ENCODE measurements at regions of chr15 and their contacts with region 1.

Region 1: DNA sequence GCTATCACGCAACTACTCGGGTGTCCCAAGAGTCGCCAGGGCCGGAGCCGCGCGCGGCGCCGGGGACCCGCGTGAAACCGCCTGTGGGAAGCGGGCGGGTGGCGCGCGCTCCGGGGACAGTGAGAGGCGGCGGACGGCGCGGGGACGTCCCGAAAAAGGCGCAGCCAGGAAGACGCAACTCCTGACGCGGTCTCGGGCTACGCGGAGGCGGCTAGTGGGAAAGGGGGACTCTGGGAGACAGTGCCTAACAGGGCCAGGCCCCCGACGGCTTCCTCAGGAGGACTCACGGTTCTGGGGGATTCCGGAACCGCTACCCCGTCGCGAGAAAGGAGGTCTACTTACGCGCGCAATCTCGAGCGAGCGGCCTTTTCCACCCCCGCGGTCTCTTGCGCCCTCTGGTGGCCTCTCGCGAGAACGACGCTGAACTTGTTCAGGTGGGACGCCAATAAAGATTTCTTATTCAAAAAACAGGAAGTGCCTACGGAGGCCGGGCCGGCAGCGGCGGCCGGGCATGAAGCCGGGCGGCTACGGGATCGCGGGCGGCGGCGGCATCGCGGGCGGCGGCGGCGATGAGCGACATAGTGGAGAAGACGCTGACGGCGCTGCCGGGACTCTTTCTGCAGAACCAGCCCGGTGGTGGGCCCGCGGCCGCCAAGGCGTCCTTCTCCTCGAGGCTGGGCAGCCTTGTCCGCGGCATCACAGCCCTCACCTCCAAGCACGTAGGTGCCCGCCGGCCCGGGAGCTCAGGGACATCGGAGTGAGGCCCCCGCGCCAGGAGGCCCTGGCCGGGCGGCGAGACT is at the start of gene AP4E1:
- DNase-seq: peak; percentile 94
- H3K4me3 ChIP-seq: peak within 1 kb of the TSS; percentile 98
- H3K27ac ChIP-seq: peak within 1 kb of the TSS; percentile 87
- H3K4me1 ChIP-seq: peaks cover 30% of the 10 kb centered on the region
- H3K27me3 ChIP-seq: no peaks in the 10 kb centered on the region
- total RNA-seq, gene AP4E1: 14.4 and 15.0 TPM in 2 replicates

Region 2: GRCh38 chr15:50353975-50354837 is 554.2 kb before region 1 on chr15:
- in situ Hi-C with region 1: no loop called
- DNase-seq: peak; percentile 87
- H3K4me3 ChIP-seq: peak overlapping the region; percentile 89
- H3K27ac ChIP-seq: peak overlapping the region; percentile 99
- H3K4me1 ChIP-seq: peaks cover 44% of the 10 kb centered on the region
- H3K27me3 ChIP-seq: no peaks in the 10 kb centered on the region

Region 3: DNA sequence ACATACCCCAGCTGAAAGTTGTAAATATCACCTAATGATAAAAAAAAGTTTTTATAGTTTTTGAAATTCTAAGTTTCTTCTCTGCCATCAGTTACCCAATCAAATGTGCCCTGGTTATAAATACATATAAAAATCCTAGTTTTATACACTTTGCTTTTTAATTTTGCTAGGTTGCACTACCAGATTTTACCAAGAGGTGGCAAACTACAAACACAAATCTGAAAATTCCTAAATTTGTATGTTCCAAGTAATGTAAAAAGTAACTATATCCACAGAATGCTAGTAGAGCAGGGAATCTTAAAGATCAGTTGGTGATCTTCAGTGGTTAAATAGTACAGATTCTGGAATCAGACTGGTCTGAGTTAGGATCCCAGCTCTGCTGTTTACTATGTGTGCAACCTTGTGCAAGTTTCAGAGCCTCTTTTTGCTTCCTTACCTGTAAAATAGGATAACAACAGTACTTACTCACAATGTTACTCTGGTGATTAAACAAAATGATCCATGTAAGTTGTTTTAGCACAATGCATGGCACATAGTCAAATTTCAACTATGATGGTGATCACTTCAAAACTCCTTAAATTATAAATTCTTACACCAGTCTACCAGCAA is 232.8 kb before region 1 on chr15:
- in situ Hi-C with region 1: loop called (anchors 10 kb)
- DNase-seq: peak; percentile 53
- H3K4me3 ChIP-seq: no peak overlapping the region
- H3K27ac ChIP-seq: no peak overlapping the region; the same call in 1 of the 2 replicates
- H3K4me1 ChIP-seq: peaks cover 20% of the 10 kb centered on the region
- H3K27me3 ChIP-seq: no peaks in the 10 kb centered on the region